ENCODE measurements at regions of chr19 and their contacts with region 1.

Region 1: DNA sequence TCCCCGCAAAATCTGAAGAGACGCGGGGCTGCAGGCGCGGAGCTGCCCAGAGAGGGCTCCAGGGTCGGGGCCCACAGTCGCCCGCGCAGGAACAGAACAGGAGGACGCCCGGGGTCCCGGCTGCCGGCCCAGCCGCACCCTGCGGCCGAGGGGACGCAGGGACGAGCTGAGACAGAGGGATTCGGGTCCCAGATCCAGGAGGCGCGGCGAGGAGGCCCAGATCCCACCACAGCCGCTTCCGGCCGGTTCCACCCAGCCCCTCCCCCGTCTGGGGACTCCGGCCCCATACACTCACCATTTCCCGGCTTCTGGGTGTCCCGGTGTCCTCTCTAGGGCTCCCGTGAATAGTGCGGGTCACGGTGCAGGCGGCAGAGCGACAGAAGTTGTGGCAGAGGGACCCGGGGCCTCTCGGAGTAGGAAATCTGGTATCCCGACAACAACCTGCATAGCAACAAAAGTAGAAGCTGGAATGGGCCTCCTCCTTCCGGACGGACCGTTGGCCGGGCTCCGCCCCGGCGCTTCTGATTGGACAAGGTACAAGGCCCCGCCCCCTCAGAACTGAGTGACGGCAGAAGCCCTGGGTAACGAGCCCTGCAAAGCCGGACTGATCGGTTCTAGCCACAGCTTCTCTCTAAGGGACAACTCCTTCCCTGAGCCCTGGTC is at the start of gene ZNF20:
- DNase-seq: peak; percentile 96 to 98 (median 98)
- H3K4me3 ChIP-seq: peak within 1 kb of the TSS; percentile 9 to 87 (median 48)
- H3K27ac ChIP-seq: peak within 1 kb of the TSS in 4 of 5 donors; percentile 20 to 90 (median 76)
- H3K4me1 ChIP-seq: peaks cover 10 to 21% of the 10 kb centered on the region in 2 donors
- H3K27me3 ChIP-seq: no peaks in the 10 kb centered on the region
- CTCF ChIP-seq: no peak
- POLR2A ChIP-seq: peak in 1 of 2 donors; percentile 55
- total RNA-seq, gene ZNF20: 1.2 to 8.8 (median 4.4) TPM

Region 2: GRCh38 chr19:11887611-11888531 is 252.1 kb before region 1 on chr19 and contains the start of gene ZNF69:
- intact Hi-C with region 1: loop called in 1 of 2 experiments (anchors 5 kb)
- DNase-seq: peak; percentile 81 to 94 (median 90)
- H3K4me3 ChIP-seq: peak within 1 kb of the TSS; percentile 69 to 86 (median 74)
- H3K27ac ChIP-seq: peak within 1 kb of the TSS; percentile 80 to 92 (median 86)
- H3K4me1 ChIP-seq: peaks cover 3 to 9% of the 10 kb centered on the region in 2 donors
- H3K27me3 ChIP-seq: no peaks in the 10 kb centered on the region
- CTCF ChIP-seq: peak in 4 of 6 experiments; percentile 21 to 34 (median 24)
- POLR2A ChIP-seq: peak; percentile 15 to 50
- total RNA-seq, gene ZNF69: 5.5 to 138 (median 12.9) TPM

Region 3: GRCh38 chr19:12064590-12065538 is 75.2 kb before region 1 on chr19 and contains the start of gene ZNF844:
- intact Hi-C with region 1: loop called (anchors 2 to 5 kb)
- DNase-seq: peak; percentile 97 to 99 (median 98)
- H3K4me3 ChIP-seq: peak within 1 kb of the TSS; percentile 40 to 88 (median 78)
- H3K27ac ChIP-seq: peak within 1 kb of the TSS; percentile 54 to 98 (median 84)
- H3K4me1 ChIP-seq: peaks cover 8 to 16% of the 10 kb centered on the region in 2 donors
- H3K27me3 ChIP-seq: no peaks in the 10 kb centered on the region
- CTCF ChIP-seq: no peak
- POLR2A ChIP-seq: peak; percentile 90 to 95
- total RNA-seq, gene ZNF844: 5.2 to 14.4 (median 9.9) TPM

Region 4: DNA sequence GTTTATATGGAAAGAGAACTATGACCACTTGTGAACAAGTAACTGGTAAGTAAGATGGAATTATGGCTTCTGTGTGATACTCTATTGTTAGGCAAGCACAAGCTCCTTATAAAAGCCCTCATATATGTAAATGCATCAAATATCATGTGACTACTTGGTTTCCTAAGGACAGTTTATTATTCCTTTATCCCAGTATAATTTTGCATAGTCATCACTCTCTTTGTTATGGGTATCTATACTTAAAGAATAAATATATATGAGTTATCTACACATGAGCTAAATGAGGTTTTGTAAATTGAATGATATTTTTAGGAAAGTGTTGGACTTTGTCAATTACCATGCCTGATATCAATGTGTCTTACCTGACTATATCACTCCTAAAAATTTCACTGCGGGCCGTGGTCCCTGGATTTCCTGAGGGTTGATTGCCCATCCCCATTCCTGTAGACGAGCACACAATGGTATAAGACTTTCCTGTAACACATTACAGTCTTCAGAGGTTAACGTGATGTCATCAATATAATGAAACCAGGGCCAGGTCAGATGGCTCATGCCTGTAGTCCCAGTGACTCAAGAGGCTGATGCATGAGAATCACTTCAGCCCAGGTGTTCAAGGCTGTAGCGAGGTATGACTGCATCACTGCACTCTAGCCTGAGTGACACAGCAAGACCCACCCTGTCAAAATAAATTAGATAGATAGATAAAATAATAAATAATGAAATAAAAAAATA is 54.8 kb before region 1 on chr19:
- intact Hi-C with region 1: loop called in 1 of 2 experiments (anchors 5 kb)
- DNase-seq: no peak
- H3K4me3 ChIP-seq: no peak overlapping the region
- H3K27ac ChIP-seq: no peak overlapping the region
- H3K4me1 ChIP-seq: no peaks in the 10 kb centered on the region
- H3K27me3 ChIP-seq: no peaks in the 10 kb centered on the region
- CTCF ChIP-seq: no peak
- POLR2A ChIP-seq: no peak

Measured in adrenal gland (tissue), 19 donors.